CD4-positive, alpha-beta T cell (primary cell): ENCODE measurements at regions of chr20 and their contacts with region 1.

Region 1: GRCh38 chr20:22684072-22684762 is 99.8 kb upstream of the FOXA2 start:
- DNase-seq: peak in 4 of 14 experiments; percentile 2 to 39 (median 24)
- ATAC-seq: no peak
- H3K4me3 ChIP-seq: no peak overlapping the region
- H3K4me3 Mint-ChIP-seq: no peak overlapping the region
- H3K27ac ChIP-seq: no peak overlapping the region
- H3K27ac Mint-ChIP-seq: no peak overlapping the region
- H3K4me1 ChIP-seq: peaks cover 3% of the 10 kb centered on the region
- H3K4me1 Mint-ChIP-seq: no peaks in the 10 kb centered on the region
- H3K27me3 ChIP-seq: no peaks in the 10 kb centered on the region
- H3K27me3 Mint-ChIP-seq: no peaks in the 10 kb centered on the region
- CTCF ChIP-seq: peak; percentile 23

Region 2: DNA sequence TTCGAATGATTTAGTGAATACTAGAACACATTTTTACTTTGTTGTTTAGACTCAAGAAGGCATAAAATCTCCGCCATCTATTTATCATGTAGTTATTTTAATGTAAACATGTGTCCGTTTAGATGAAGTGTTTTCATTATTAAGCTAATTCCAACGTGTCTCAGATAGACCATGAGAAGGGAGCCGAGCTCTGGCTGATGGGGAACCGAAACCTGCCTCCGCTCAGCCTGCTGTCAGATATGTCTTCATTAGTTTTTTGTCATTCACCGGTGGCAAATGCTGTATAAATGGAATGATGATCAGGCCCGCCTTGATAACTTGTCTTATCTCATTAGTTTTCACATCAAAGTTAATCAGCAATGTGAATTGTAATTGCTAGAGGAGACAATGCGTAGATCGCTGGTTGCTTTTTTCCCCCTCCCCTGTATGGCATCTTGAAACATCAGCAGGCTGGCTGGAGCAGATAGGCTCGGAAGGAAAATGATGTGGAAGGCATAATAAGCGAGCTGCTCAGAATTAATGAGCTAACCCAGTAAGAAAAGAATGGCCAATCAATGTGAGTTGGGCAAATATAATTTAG is 1714.4 kb before region 1 on chr20:
- CTCF ChIA-PET with region 1: no interaction called
- POLR2A ChIA-PET with region 1: no interaction called
- intact Hi-C with region 1: no loop called
- DNase-seq: no peak
- ATAC-seq: no peak
- H3K4me3 ChIP-seq: no peak overlapping the region
- H3K4me3 Mint-ChIP-seq: no peak overlapping the region
- H3K27ac ChIP-seq: no peak overlapping the region
- H3K27ac Mint-ChIP-seq: no peak overlapping the region
- H3K4me1 ChIP-seq: no peaks in the 10 kb centered on the region
- H3K4me1 Mint-ChIP-seq: no peaks in the 10 kb centered on the region
- H3K27me3 ChIP-seq: no peaks in the 10 kb centered on the region
- H3K27me3 Mint-ChIP-seq: peaks cover 12% of the 10 kb centered on the region
- CTCF ChIP-seq: no peak

Region 3: DNA sequence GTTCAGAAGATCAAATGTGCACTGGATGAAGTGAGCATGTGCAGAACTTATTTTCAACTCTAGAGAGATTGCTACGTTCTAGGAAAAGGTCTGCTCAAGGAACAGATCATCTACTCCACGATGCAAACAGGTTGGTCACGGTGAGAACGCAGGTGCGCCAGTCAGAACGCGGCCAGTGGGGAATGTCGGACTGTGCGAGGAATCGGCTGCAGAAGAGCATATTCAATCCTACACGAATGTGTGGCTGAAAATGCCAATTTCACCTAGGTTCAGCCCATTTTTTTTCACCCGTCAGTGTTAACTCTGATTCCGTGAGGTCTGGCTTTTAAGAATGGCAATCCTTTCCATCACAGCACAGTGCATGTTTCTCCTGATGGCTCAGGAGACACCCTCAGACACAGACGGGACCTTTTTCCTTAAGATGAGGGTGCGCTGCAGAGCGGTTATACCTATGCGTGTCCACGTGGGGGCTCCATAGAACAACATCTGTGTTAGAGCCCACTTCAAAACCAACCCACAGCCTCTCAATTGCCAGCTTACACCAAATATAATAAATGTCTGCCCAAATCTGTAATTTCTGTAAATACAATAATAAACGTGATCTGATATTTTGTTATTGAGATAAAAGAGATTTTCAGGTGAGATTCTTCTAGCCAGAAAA is 350.2 kb before region 1 on chr20:
- CTCF ChIA-PET with region 1: no interaction called
- POLR2A ChIA-PET with region 1: no interaction called
- intact Hi-C with region 1: loop called (anchors 5 to 10 kb)
- DNase-seq: peak in 6 of 14 experiments; percentile 5 to 51 (median 20)
- ATAC-seq: peak; percentile 48
- H3K4me3 ChIP-seq: no peak overlapping the region
- H3K4me3 Mint-ChIP-seq: no peak overlapping the region
- H3K27ac ChIP-seq: no peak overlapping the region
- H3K27ac Mint-ChIP-seq: no peak overlapping the region
- H3K4me1 ChIP-seq: no peaks in the 10 kb centered on the region
- H3K4me1 Mint-ChIP-seq: no peaks in the 10 kb centered on the region
- H3K27me3 ChIP-seq: no peaks in the 10 kb centered on the region
- H3K27me3 Mint-ChIP-seq: peaks cover 28% of the 10 kb centered on the region
- CTCF ChIP-seq: peak; percentile 43

Region 4: GRCh38 chr20:22339091-22339881 is 344.9 kb before region 1 on chr20:
- CTCF ChIA-PET with region 1: no interaction called
- POLR2A ChIA-PET with region 1: no interaction called
- intact Hi-C with region 1: loop called (anchors 5 to 10 kb)
- DNase-seq: peak in 4 of 14 experiments; percentile 1 to 54 (median 22)
- ATAC-seq: no peak
- H3K4me3 ChIP-seq: no peak overlapping the region
- H3K4me3 Mint-ChIP-seq: no peak overlapping the region
- H3K27ac ChIP-seq: no peak overlapping the region
- H3K27ac Mint-ChIP-seq: no peak overlapping the region
- H3K4me1 ChIP-seq: no peaks in the 10 kb centered on the region
- H3K4me1 Mint-ChIP-seq: no peaks in the 10 kb centered on the region
- H3K27me3 ChIP-seq: no peaks in the 10 kb centered on the region
- H3K27me3 Mint-ChIP-seq: peaks cover 17% of the 10 kb centered on the region
- CTCF ChIP-seq: peak; percentile 56

Region 5: DNA sequence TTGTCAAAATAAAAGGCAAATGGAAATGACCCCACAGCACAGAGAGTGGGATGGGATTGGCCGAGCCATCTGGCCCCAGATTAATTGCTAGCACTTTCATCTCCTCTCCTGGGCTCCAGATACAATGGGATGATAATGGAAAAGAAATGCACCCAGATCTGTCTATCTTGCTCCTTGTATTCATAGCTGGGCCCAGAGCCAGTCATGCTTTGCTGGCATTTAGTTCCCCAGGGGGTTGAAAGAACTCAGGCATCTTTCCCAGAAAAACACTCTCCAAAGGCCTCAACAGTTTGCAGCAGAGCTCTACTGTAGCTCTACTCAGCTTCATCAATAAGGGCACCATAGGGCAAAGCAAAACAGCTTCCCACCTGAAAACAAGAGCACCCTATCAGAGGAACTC is 16.1 kb after region 1 on chr20:
- CTCF ChIA-PET with region 1: no interaction called
- POLR2A ChIA-PET with region 1: no interaction called
- intact Hi-C with region 1: no loop called
- DNase-seq: no peak
- ATAC-seq: no peak
- H3K4me3 ChIP-seq: no peak overlapping the region
- H3K4me3 Mint-ChIP-seq: no peak overlapping the region
- H3K27ac ChIP-seq: no peak overlapping the region
- H3K27ac Mint-ChIP-seq: no peak overlapping the region
- H3K4me1 ChIP-seq: no peaks in the 10 kb centered on the region
- H3K4me1 Mint-ChIP-seq: no peaks in the 10 kb centered on the region
- H3K27me3 ChIP-seq: no peaks in the 10 kb centered on the region
- H3K27me3 Mint-ChIP-seq: no peaks in the 10 kb centered on the region
- CTCF ChIP-seq: no peak